HepG2 (cell line): ENCODE measurements at regions of chr2 and their contacts with region 1.

Region 1: DNA sequence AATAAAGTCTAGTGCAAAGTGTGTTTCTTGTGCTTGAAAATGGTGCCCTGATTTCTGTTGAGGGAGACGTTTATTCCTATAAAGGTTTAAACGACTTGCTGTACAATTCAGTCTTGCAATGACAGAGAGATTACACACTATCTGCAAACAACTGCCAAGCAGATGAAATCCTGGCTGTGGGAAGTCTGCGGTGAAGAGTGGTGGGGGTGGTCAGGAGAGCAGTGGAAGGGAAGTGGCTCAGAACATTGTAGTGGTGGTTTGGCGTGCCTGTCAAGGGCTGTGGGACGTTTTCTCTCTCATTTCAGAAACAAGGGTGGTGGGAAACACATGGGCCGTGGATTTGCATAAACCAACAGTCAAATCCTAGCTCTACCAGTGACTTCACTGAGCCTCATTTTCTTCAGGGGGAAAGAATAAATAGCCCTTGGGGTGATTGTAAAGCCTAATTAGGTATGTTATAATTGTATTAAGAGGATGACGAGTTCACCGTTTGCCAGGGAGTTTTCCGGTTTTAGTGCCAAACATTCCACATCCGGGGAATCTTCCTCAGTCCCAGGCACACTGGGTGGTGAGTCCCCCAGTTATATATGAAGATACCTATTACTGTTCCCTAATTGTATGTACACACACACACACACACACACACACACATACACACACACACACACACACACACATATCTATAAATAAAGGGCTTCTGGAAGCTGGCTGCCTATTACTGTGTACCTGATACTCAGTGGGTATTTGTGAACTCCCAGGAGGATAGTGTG is 115.0 kb downstream of the SPTBN1 start:
- DNase-seq: peak; percentile 79
- ATAC-seq: peak; percentile 69
- H3K4me3 ChIP-seq: peak overlapping the region in 2 of 3 experiments; percentile 17 to 20; a peak in 1 of 6 replicates
- H3K27ac ChIP-seq: peak overlapping the region; percentile 76
- H3K4me1 ChIP-seq: peaks cover 98% of the 10 kb centered on the region
- H3K27me3 ChIP-seq: no peaks in the 10 kb centered on the region
- CTCF ChIP-seq: no peak
- EP300 ChIP-seq: 0 out of 4 replicates have a peak, but pooled peaks of 1 of the 2 experiments have one; percentile 20
- POLR2A ChIP-seq: no peak
- RAD21 ChIP-seq: no peak

Region 2: GRCh38 chr2:54531558-54531957 is 39.6 kb before region 1 on chr2:
- CTCF ChIA-PET with region 1: no interaction called
- POLR2A ChIA-PET with region 1: interaction called, 14 read pairs
- in situ Hi-C with region 1: no loop called
- intact Hi-C with region 1: loop called (anchors 5 kb)
- DNase-seq: no peak
- ATAC-seq: no peak
- H3K4me3 ChIP-seq: no peak overlapping the region
- H3K27ac ChIP-seq: peak overlapping the region; percentile 39
- H3K4me1 ChIP-seq: peaks cover 60% of the 10 kb centered on the region
- H3K27me3 ChIP-seq: no peaks in the 10 kb centered on the region
- CTCF ChIP-seq: no peak
- EP300 ChIP-seq: no peak
- POLR2A ChIP-seq: no peak
- RAD21 ChIP-seq: no peak

Region 3: DNA sequence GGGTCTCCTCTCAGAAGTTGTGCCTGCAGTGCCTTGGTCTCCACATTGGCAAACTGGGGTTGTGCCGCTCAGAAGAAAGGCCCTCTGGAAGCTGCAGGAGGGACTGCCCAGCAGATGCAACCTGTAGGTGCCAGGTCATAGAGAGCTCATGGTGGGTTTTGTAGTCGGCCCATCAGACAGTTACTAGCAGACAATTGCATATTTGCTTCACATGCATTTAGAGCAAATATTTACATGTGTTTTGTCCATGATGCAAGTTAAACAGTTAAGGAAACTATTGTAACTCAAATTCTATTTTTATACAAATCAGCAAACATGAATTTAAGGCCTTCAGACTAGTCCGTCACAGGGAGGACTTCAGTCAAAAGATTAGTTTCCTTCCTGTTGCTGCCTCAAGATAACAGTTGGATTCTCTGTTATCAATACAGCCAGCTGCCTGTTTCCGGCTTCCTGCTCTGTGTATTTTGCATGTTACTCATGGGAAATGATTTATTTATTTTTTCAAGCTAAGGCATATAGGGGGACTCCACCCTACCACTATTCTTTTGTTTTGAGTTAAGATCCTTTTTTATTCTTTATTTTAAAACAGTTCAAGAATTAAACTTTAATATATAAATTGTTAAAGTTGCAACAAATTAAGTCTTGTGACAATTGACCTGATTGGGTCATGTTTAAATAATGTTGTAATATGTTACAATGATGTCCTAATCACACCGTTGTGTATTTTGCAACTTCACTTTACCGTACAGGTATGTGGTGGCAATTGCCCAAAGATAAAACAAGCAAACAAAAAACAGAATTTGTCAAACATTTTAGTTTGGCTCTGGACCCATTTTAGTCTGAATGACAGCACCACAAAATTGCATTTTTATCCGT is 18.5 kb after region 1 on chr2:
- CTCF ChIA-PET with region 1: no interaction called
- POLR2A ChIA-PET with region 1: interaction called, 10 read pairs
- in situ Hi-C with region 1: no loop called
- intact Hi-C with region 1: loop called (anchors 2 kb)
- DNase-seq: peak; percentile 98
- ATAC-seq: peak; percentile 91
- H3K4me3 ChIP-seq: peak overlapping the region; percentile 22 to 55 (median 28)
- H3K27ac ChIP-seq: peak overlapping the region; percentile 92
- H3K4me1 ChIP-seq: peaks cover 90% of the 10 kb centered on the region
- H3K27me3 ChIP-seq: no peaks in the 10 kb centered on the region
- CTCF ChIP-seq: no peak
- EP300 ChIP-seq: peak; percentile 71 to 84
- POLR2A ChIP-seq: peak; percentile 39 to 57; a peak in 3 of 4 replicates
- RAD21 ChIP-seq: no peak

Region 4: DNA sequence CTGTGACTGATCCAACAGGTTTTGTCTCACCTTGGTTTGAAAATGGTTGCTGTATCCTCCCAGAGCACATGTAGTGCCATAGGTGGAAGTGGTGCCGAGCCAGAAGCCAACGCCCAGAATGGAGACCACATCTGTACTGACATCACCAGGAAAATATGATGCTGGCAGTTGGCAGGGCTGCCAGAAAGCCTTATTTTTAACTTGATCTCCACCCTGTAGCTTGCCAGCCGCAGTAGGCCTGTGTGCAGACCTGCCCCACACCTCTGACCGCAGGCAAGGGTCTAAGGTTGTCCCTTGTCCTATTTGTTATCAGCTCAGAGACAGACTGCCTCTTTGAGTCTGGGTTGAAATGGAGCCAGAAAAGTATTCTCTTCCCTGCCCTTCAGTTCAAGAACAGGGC is 28.8 kb after region 1 on chr2:
- CTCF ChIA-PET with region 1: no interaction called
- POLR2A ChIA-PET with region 1: no interaction called
- in situ Hi-C with region 1: no loop called
- intact Hi-C with region 1: loop called (anchors 1 kb)
- DNase-seq: no peak
- ATAC-seq: peak; percentile 27
- H3K4me3 ChIP-seq: no peak overlapping the region
- H3K27ac ChIP-seq: no peak overlapping the region
- H3K4me1 ChIP-seq: peaks cover 96% of the 10 kb centered on the region
- H3K27me3 ChIP-seq: no peaks in the 10 kb centered on the region
- CTCF ChIP-seq: no peak
- EP300 ChIP-seq: no peak
- POLR2A ChIP-seq: no peak
- RAD21 ChIP-seq: no peak